Heart right ventricle (tissue), 16 donors: ENCODE measurements at regions of chr19 and their contacts with region 1.

Region 1: GRCh38 chr19:23249911-23250649 is at the start of gene ZNF724:
- DNase-seq: peak; percentile 89 to 96
- ATAC-seq: peak; percentile 99 to 100 (median 100)
- H3K4me3 ChIP-seq: peak within 1 kb of the TSS; percentile 36 to 83 (median 74)
- H3K27ac ChIP-seq: peak within 1 kb of the TSS in 9 of 10 donors; percentile 47 to 75 (median 64)
- H3K4me1 ChIP-seq: peaks cover 3 to 14% (median 9%) of the 10 kb centered on the region in 9 donors
- H3K27me3 ChIP-seq: no peaks in the 10 kb centered on the region
- CTCF ChIP-seq: no peak
- total RNA-seq, gene ZNF724: 0.93 to 2.2 (median 1.7) TPM

Region 2: GRCh38 chr19:23116802-23117571 is 133.1 kb before region 1 on chr19 and contains the start of gene ZNF730:
- intact Hi-C with region 1: loop called in 1 of 10 experiments (anchors 10 kb)
- DNase-seq: peak; percentile 37 to 91
- ATAC-seq: peak; percentile 87 to 100 (median 95)
- H3K4me3 ChIP-seq: peak within 1 kb of the TSS; percentile 2 to 78 (median 63)
- H3K27ac ChIP-seq: peak within 1 kb of the TSS in 2 of 10 donors; percentile 18 to 48
- H3K4me1 ChIP-seq: peaks cover 0 to 9% (median 6%) of the 10 kb centered on the region in 9 donors
- H3K27me3 ChIP-seq: no peaks in the 10 kb centered on the region
- CTCF ChIP-seq: no peak
- total RNA-seq, gene ZNF730: 0.09 to 0.72 (median 0.28) TPM in 9 of 10 donors, not detected in the other